ENCODE measurements at regions of chr19 and their contacts with region 1.

Region 1: DNA sequence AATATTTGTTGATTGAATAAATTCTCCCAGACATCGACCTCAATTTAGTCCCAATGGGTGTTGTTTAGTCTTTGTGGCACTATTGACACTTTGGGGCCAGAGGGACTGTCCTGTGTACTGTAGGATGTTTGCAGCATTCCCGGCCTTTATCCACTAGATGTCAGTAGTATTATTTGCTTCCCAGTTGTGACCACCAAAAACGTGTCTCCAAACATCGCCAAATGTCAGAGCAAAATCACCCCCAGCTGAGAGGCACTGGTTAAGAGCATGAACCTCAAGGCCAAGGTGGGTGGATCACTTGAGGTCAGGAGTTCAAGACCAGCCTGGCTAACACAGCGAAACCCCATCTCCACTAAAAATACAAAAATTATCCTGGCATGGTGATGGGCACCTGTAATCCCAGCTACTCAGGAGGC is 15.4 kb downstream of the NLRP12 start:
- DNase-seq: peak; percentile 76
- ATAC-seq: peak; percentile 91
- H3K4me3 ChIP-seq: no peak overlapping the region
- H3K27ac ChIP-seq: no peak overlapping the region
- H3K4me1 ChIP-seq: no peaks in the 10 kb centered on the region
- H3K27me3 ChIP-seq: no peaks in the 10 kb centered on the region
- CTCF ChIP-seq: peak; percentile 87

Region 2: DNA sequence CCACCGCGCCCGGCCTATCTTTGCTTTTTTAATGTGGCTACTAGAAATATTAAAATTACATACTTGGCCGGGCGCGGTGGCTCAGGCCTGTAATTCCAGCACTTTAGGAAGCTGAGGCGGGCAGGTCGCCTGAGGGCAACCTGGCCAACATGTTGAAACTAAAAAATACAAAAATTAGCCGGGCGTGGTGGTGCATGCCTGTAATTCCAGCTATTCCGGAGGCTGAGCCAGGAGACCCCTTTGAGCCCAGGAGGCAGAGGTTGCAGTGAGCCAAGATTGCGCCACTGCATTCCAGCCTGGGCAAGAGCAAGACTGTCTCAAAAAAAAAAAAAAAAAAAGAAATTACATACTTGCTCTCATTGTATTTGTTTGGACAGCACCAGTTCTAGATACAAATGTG is 211.7 kb before region 1 on chr19:
- CTCF ChIA-PET with region 1: no interaction called
- POLR2A ChIA-PET with region 1: no interaction called
- intact Hi-C with region 1: no loop called
- DNase-seq: no peak
- ATAC-seq: no peak
- H3K4me3 ChIP-seq: no peak overlapping the region
- H3K27ac ChIP-seq: no peak overlapping the region
- H3K4me1 ChIP-seq: no peaks in the 10 kb centered on the region
- H3K27me3 ChIP-seq: no peaks in the 10 kb centered on the region
- CTCF ChIP-seq: no peak

Region 3: DNA sequence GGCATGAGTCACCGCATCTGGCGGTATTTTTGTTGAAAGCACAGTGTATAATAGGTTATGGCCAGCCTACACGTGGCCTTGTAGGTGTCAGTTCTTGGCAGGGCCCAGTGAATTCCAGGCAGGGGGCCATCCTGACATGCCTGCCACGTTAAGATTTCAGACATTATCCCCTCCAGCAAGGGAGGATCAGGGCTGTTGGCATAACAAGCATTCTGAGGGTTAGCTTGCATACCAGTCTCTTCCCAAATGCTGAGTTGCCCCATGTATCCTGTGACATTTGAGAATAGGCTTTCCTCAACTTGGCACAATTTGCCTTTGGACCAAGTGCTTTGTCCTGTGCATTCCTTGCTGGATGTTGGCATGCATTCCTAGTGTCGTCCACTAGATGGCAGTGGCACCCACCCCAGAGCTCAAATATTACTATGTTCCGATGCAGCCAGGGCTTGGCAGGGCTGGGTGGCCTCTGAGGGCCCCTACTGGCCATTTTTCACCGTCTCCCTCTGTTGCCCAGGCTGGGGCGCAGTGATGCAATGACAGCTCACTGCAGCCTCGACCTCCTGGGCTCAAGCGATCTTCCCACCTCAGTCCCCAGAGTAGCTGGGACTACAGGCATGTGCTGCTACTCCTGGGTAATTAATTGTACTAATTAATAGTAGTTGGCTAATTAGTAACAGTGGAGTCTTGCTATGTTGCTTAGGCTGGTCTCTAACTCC is 15.8 kb before region 1 on chr19:
- CTCF ChIA-PET with region 1: interaction called, 14 read pairs
- POLR2A ChIA-PET with region 1: no interaction called
- intact Hi-C with region 1: no loop called
- DNase-seq: peak; percentile 96
- ATAC-seq: peak; percentile 100
- H3K4me3 ChIP-seq: no peak overlapping the region
- H3K27ac ChIP-seq: no peak overlapping the region
- H3K4me1 ChIP-seq: no peaks in the 10 kb centered on the region
- H3K27me3 ChIP-seq: no peaks in the 10 kb centered on the region
- CTCF ChIP-seq: peak; percentile 99

Region 4: DNA sequence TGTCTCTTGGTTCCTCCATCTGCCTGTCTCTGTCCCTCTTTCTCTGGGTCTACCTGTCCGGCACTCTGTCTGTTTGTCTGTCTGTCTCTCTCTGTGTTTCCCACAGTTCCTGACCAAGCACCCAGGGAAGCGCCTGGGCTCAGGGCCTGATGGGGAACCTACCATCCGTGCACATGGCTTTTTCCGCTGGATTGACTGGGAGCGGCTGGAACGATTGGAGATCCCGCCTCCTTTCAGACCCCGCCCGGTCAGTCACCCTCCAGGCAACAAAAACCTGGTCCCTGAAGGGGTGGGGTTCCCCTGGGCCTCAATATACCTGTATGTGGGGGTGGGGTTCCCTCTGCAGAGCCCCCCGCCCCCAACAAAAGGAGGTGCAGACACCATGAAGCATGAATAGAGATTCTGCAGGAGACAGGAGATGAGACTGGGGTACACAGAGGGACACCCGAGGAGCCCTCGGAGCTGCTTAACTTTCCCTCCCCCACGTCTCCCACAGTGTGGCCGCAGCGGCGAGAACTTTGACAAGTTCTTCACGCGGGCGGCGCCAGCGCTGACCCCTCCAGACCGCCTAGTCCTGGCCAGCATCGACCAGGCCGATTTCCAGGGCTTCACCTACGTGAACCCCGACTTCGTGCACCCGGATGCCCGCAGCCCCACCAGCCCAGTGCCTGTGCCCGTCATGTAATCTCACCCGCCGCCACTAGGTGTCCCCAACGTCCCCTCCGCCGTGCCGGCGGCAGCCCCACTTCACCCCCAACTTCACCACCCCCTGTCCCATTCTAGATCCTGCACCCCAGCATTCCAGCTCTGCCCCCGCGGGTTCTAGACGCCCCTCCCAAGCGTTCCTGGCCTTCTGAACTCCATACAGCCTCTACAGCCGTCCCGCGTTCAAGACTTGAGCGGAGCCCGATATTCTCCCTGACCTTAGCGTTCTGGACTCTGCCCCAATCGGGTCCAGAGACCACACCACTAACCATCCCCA is 97.8 kb after region 1 on chr19:
- CTCF ChIA-PET with region 1: no interaction called
- POLR2A ChIA-PET with region 1: interaction called, 13 read pairs
- intact Hi-C with region 1: no loop called
- DNase-seq: peak; percentile 39
- ATAC-seq: peak; percentile 42
- H3K4me3 ChIP-seq: no peak overlapping the region
- H3K27ac ChIP-seq: no peak overlapping the region
- H3K4me1 ChIP-seq: peaks cover 17% of the 10 kb centered on the region
- H3K27me3 ChIP-seq: peaks cover 49% of the 10 kb centered on the region
- CTCF ChIP-seq: peak; percentile 96

Region 5: GRCh38 chr19:54096617-54097129 is 288.0 kb after region 1 on chr19:
- CTCF ChIA-PET with region 1: no interaction called
- POLR2A ChIA-PET with region 1: no interaction called
- intact Hi-C with region 1: loop called (anchors 10 kb)
- DNase-seq: peak; percentile 25
- ATAC-seq: peak; percentile 64
- H3K4me3 ChIP-seq: peak overlapping the region; percentile 53; the same call in 1 of the 2 replicates
- H3K27ac ChIP-seq: no peak overlapping the region
- H3K4me1 ChIP-seq: peaks cover 8% of the 10 kb centered on the region
- H3K27me3 ChIP-seq: no peaks in the 10 kb centered on the region
- CTCF ChIP-seq: peak; percentile 52